Panc1 (cell line): ENCODE measurements at regions of chr17 and their contacts with region 1.

Region 1: DNA sequence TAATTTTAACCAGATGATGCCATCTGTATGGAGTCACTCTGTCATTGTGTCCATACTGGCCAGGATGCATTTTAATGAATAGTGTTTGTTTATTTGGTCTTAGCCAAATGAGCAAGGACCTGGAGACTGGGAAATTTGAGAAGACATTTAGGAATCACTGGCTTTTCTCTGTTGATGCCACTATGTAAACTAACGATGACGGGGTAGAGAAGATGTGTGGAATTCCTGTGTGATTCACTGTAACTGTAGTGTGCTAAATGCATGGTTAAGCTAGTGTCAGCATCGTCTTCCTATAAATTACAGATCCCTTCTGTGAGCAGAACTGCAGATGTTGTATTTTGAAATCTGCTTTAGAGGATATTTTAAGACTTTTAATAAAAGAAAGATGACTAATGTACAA is 66.6 kb downstream of the NOS2 start:
- DNase-seq: no peak
- ATAC-seq: no peak
- H3K4me3 ChIP-seq: no peak overlapping the region
- H3K27ac ChIP-seq: no peak overlapping the region
- H3K4me1 ChIP-seq: no peaks in the 10 kb centered on the region
- H3K27me3 ChIP-seq: peaks cover 7% of the 10 kb centered on the region
- CTCF ChIP-seq: no peak

Region 2: DNA sequence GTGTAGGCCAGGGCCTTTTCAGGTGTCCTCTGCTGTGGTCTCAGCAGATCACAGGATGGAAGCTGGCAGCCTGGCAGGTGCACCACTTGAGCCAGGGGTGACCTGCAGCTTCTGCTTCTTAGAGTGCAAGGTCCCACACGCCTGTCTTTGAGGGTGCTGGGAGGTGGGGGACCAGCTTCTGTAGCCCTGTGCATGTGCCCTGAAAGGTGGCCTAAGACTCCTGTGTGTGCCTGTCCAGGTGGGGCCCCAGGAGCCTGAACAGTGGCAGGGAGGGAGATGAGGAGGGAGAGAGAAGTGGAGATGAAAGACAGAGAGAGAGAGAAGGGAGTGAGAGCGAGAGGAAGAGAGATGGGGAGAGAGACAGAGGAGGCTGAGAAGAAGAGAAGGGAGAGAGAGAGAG is 56.6 kb before region 1 on chr17:
- CTCF ChIA-PET with region 1: no interaction called
- POLR2A ChIA-PET with region 1: no interaction called
- in situ Hi-C with region 1: no loop called
- intact Hi-C with region 1: loop called (anchors 10 kb)
- DNase-seq: no peak
- ATAC-seq: no peak
- H3K4me3 ChIP-seq: no peak overlapping the region
- H3K27ac ChIP-seq: no peak overlapping the region
- H3K4me1 ChIP-seq: no peaks in the 10 kb centered on the region
- H3K27me3 ChIP-seq: peaks cover 11% of the 10 kb centered on the region
- CTCF ChIP-seq: no peak